Activated naive CD8-positive, alpha-beta T cell treated with anti-CD3 and anti-CD28 coated beads, Interleukin-2, amount 10 ng/mL, durations not matched to agents 7 days and 5 days (primary cell): ENCODE measurements at regions of chr7 and their contacts with region 1.

Region 1: DNA sequence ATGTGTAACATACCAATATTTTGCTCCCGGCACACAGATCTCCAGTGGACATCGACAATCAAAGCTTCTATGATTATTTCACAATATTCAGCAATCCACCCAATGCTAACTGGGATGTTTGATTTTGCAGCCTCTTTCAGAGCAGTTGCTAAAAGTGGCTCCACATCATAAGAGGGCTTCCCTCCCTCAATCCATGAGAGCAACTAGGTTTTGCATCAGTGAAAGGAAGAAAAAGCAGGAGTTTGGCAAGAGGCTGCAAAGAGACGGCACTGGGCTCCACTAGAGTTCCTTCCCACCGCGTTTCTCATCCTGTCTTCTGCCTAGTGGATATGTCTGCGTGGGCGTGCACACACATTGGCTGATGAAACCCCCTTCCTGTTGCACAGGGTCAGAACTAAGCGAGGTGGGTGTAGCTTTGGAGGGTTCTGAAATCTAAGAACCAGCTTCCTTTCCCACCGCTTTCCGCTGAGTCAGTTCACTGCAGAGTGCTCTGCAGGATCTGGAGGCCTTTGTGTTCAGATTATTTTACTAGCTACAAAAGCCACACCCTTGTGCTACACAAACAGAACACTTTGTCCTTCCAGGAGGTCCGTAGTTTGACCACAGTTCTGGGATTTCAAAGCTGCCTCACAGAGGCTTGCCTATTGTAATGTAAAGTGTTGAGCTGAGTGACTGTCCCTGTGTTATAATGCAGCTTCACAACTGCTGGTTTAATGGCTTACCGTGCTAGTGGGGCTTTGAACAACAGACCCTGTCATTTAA is 28.1 kb downstream of the ARL4A start:
- DNase-seq: peak; percentile 51
- ATAC-seq: peak; percentile 99
- H3K4me3 Mint-ChIP-seq: peak overlapping the region; percentile 71
- H3K27ac Mint-ChIP-seq: peak overlapping the region; percentile 74
- H3K4me1 Mint-ChIP-seq: peaks cover 22% of the 10 kb centered on the region
- H3K27me3 Mint-ChIP-seq: no peaks in the 10 kb centered on the region

Region 2: GRCh38 chr7:12686894-12687717 is 28.4 kb before region 1 on chr7 and contains the start of gene ARL4A:
- POLR2A ChIA-PET with region 1: interaction called, 18 read pairs
- DNase-seq: peak; percentile 88
- ATAC-seq: peak; percentile 72
- H3K4me3 Mint-ChIP-seq: peak within 1 kb of the TSS; percentile 94
- H3K27ac Mint-ChIP-seq: peak within 1 kb of the TSS; percentile 87
- H3K4me1 Mint-ChIP-seq: peaks cover 22% of the 10 kb centered on the region
- H3K27me3 Mint-ChIP-seq: no peaks in the 10 kb centered on the region
- total RNA-seq, gene ARL4A: 11.7 to 12.0 TPM

Region 3: GRCh38 chr7:12731214-12731656 is 15.7 kb after region 1 on chr7:
- POLR2A ChIA-PET with region 1: interaction called, 12 read pairs
- DNase-seq: no peak
- ATAC-seq: peak; percentile 72
- H3K4me3 Mint-ChIP-seq: peak overlapping the region; percentile 65
- H3K27ac Mint-ChIP-seq: peak overlapping the region; percentile 86
- H3K4me1 Mint-ChIP-seq: peaks cover 8% of the 10 kb centered on the region
- H3K27me3 Mint-ChIP-seq: no peaks in the 10 kb centered on the region